ENCODE measurements at regions of chr10 and their contacts with region 1.

Region 1: DNA sequence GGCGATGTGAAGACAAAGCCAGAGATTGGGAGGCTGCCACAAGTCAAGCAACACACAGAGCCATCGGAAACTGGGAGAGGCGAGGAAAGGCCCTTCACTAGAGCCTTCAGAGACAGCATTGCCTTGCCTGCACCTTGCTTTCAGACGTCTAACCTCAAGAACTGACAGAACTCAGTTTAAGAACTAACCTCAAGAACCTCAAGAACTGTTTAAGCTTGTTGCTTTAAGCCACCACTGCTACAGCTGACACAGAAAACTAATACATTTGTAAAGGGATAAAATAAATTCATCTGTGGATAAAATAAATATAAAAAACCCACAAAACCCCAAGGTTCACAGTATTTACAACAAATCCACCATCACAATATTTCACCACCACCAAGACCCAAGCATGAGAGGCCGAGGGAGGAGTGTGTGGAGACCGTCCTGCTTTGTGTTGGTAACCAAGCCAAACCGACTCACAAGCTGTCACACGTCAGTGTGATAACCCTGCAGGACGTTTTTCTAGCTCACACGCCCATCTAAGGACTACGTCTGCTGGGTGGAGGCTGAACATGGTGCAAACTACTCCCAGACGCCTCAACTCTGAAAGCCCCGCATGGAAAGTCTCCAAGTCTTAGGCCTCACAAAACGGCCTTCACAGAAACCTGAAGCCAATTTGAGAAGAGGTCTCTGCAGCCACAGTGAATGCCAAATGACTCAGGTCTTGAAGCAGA is 116.8 kb downstream of the ABLIM1 start:
- DNase-seq: peak; percentile 86 to 92 (median 90)
- H3K4me3 ChIP-seq: no peak overlapping the region
- H3K4me3 Mint-ChIP-seq: peak overlapping the region; percentile 57 to 87 (median 76)
- H3K27ac ChIP-seq: peak overlapping the region; percentile 74
- H3K27ac Mint-ChIP-seq: peak overlapping the region; percentile 89 to 100 (median 98)
- H3K4me1 ChIP-seq: peaks cover 97% of the 10 kb centered on the region
- H3K4me1 Mint-ChIP-seq: peaks cover 67 to 92% (median 86%) of the 10 kb centered on the region in 4 donors
- H3K27me3 ChIP-seq: no peaks in the 10 kb centered on the region
- H3K27me3 Mint-ChIP-seq: no peaks in the 10 kb centered on the region

Region 2: DNA sequence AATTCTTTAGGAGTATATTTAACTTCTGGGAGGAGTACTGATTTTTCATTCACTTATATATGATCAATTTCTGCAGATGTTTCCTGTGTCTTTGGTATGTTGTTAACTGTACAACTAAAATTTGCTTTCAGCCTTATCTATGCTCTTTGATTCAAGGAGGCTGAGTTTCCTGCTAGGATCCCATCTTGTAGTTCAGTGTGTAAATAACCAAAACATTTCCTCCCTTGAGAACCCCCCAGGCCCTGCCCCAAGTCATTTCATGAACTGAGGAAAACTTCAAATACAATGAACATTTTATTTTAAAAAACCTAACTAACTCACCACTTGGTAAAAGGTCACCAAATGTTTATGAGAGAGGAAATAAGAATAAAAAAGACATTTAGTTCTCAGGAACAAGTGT is 246.7 kb before region 1 on chr10:
- CTCF ChIA-PET with region 1: no interaction called
- POLR2A ChIA-PET with region 1: no interaction called
- intact Hi-C with region 1: no loop called
- DNase-seq: no peak
- H3K4me3 ChIP-seq: no peak overlapping the region
- H3K4me3 Mint-ChIP-seq: peak overlapping the region in 1 of 8 donors; percentile 14
- H3K27ac ChIP-seq: no peak overlapping the region
- H3K27ac Mint-ChIP-seq: no peak overlapping the region
- H3K4me1 ChIP-seq: no peaks in the 10 kb centered on the region
- H3K4me1 Mint-ChIP-seq: no peaks in the 10 kb centered on the region
- H3K27me3 ChIP-seq: no peaks in the 10 kb centered on the region
- H3K27me3 Mint-ChIP-seq: no peaks in the 10 kb centered on the region

Region 3: DNA sequence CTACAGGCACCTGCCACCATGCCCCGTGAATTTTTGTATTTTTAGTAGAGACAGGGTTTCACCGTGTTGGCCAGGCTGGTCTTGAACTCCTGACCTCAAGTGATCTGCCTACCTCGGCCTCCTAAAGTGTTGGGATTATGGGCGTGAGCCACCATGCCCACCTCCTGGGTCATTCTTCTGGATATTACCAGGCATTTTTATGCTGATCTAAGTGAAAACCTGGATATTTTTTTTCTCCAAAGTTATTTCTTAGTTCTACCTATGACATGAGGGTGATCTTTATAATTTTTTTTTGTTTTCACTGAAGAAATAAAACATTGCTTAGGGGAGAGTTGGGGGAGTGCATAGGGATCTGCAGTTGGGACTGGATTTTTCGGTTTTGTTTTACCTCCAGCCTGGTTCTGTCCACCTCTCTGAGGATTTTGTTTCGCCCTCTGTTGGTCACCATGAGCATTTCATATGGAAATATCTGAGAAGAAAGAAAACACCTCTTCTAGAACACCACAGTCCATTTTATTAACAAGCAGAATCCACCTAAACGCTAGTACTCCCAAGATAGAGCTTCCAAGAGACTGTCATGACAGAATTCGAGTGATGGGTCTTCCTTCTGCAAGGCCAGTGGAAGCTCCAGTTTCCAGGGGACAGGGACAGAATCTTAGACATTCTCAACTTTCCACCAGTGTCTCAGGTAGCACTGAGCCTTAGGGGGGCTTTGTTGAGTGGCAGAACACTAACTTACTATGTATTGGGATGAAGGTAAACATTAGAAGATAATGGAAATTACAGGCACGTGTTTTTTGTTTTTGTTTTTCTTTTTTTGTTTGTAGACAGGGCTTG is 103.6 kb before region 1 on chr10:
- CTCF ChIA-PET with region 1: no interaction called
- POLR2A ChIA-PET with region 1: no interaction called
- intact Hi-C with region 1: no loop called
- DNase-seq: no peak
- H3K4me3 ChIP-seq: no peak overlapping the region
- H3K4me3 Mint-ChIP-seq: no peak overlapping the region
- H3K27ac ChIP-seq: no peak overlapping the region
- H3K27ac Mint-ChIP-seq: peak overlapping the region in 3 of 7 donors; percentile 9 to 49 (median 11)
- H3K4me1 ChIP-seq: no peaks in the 10 kb centered on the region
- H3K4me1 Mint-ChIP-seq: peaks cover 0 to 3% (median 0%) of the 10 kb centered on the region in 4 donors
- H3K27me3 ChIP-seq: no peaks in the 10 kb centered on the region
- H3K27me3 Mint-ChIP-seq: no peaks in the 10 kb centered on the region

Region 4: GRCh38 chr10:114448897-114449296 is 92.3 kb before region 1 on chr10:
- CTCF ChIA-PET with region 1: no interaction called
- POLR2A ChIA-PET with region 1: no interaction called
- intact Hi-C with region 1: no loop called
- DNase-seq: no peak
- H3K4me3 ChIP-seq: no peak overlapping the region
- H3K4me3 Mint-ChIP-seq: no peak overlapping the region
- H3K27ac ChIP-seq: no peak overlapping the region
- H3K27ac Mint-ChIP-seq: no peak overlapping the region
- H3K4me1 ChIP-seq: no peaks in the 10 kb centered on the region
- H3K4me1 Mint-ChIP-seq: peaks cover 0 to 10% (median 7%) of the 10 kb centered on the region in 4 donors
- H3K27me3 ChIP-seq: no peaks in the 10 kb centered on the region
- H3K27me3 Mint-ChIP-seq: no peaks in the 10 kb centered on the region

Region 5: DNA sequence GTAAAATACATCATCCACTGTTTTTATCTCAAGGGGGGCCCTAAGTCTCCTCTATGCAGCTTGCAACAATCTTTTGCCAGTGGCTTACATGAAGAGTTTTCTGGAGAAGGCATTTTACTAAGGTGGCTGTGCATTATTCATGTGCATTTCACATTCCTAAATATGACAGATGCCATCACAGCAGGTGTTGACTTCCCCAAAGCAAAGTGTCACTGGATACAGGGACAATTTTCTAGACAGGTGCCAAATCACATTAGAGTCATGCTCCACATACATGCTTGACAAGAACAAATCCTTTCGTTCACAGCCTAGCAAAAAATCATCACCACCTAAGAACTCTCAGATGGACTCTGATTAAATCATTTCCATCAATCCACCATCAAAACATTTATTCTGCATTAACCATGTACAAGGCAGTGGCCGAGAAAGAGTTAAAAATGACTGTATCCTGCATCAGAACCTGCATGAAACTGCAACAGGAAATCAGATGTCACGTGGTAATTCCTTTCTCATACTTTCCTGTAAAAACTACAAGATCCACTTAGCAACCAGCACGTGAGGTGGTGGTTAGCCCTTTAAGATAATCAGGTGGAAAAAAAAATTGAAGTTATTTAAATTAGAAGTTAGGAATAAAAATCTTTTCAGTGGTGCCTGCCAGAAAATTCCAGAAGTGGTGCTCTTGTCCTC is 48.7 kb before region 1 on chr10:
- CTCF ChIA-PET with region 1: interaction called, 3 read pairs
- POLR2A ChIA-PET with region 1: interaction called, 85 read pairs
- intact Hi-C with region 1: loop called (anchors 2 kb)
- DNase-seq: peak; percentile 20 to 54 (median 39)
- H3K4me3 ChIP-seq: no peak overlapping the region
- H3K4me3 Mint-ChIP-seq: peak overlapping the region in 7 of 8 donors; percentile 10 to 68 (median 59)
- H3K27ac ChIP-seq: no peak overlapping the region
- H3K27ac Mint-ChIP-seq: peak overlapping the region; percentile 15 to 84 (median 80)
- H3K4me1 ChIP-seq: peaks cover 53% of the 10 kb centered on the region
- H3K4me1 Mint-ChIP-seq: peaks cover 40 to 62% (median 54%) of the 10 kb centered on the region in 4 donors
- H3K27me3 ChIP-seq: no peaks in the 10 kb centered on the region
- H3K27me3 Mint-ChIP-seq: no peaks in the 10 kb centered on the region

Region 6: DNA sequence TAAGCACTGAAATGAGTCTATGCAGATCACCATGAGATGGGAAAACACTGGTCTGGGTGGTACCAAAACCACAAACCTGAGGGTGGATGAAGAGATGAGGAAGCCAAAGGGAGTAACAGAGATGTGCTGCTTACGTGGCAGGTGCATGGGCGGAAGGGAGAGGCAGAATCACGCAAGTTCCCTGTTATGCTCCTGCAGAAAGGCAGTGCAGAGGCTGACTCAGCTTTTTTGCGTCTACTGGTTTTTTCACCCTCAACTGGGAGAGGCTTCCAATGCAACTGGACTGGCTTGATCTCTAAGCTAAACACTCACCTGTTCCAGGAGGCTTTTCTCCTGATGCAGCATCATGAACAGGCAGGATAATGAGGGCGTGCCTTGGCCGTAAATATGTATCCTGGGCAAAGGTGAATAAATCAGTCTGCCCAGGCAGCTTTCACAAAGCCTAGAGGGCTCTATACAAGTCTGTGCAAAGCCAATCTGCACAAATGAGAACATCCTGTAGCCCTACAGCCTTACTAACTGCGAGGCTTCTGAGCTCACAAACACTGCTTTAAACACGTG is 41.5 kb before region 1 on chr10:
- CTCF ChIA-PET with region 1: interaction called, 4 read pairs
- POLR2A ChIA-PET with region 1: interaction called, 85 read pairs
- intact Hi-C with region 1: no loop called
- DNase-seq: peak; percentile 44 to 70 (median 59)
- H3K4me3 ChIP-seq: no peak overlapping the region
- H3K4me3 Mint-ChIP-seq: peak overlapping the region; percentile 36 to 75 (median 57)
- H3K27ac ChIP-seq: peak overlapping the region; percentile 49
- H3K27ac Mint-ChIP-seq: peak overlapping the region; percentile 70 to 93 (median 87)
- H3K4me1 ChIP-seq: peaks cover 82% of the 10 kb centered on the region
- H3K4me1 Mint-ChIP-seq: peaks cover 63 to 94% (median 82%) of the 10 kb centered on the region in 4 donors
- H3K27me3 ChIP-seq: no peaks in the 10 kb centered on the region
- H3K27me3 Mint-ChIP-seq: no peaks in the 10 kb centered on the region

Region 7: DNA sequence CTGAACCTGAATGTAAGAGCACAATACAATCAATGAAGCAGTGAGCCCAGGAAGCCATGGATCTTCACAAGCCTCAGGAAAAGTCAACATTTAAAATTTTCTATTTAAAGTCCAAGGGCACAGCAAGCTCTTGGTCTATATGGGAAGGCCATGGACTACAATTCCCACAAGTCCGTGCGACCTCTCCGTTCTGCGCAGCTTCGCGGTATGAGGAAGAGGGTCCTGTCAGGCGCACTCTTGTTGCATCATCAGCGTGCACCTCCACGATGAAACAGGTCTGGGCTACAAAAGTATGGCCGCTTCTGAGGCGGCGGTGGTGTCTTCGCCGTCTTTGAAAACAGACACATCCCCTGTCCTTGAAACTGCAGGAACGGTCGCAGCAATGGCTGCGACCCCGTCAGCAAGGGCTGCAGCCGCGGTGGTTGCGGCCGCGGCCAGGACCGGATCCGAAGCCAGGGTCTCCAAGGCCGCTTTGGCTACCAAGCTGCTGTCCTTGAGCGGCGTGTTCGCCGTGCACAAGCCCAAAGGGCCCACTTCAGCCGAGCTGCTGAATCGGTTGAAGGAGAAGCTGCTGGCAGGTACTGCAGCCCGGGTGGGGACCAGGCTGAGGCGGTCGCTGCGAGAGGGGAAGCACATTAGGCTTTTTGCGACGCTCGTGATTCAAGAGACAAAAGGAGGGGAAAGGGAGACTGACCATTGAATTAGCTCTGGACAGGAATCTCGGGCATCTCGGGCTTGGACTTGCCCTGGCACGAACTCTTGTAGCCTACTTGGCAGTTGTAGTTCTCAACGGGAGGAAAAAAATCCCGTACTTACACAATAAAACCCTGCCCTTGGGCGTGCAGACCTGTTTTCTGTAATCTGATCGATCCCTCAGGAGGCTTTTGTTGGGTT is 397.0 kb after region 1 on chr10 and contains the start of gene TRUB1:
- CTCF ChIA-PET with region 1: no interaction called
- POLR2A ChIA-PET with region 1: no interaction called
- intact Hi-C with region 1: loop called (anchors 5 kb)
- DNase-seq: peak; percentile 85 to 93 (median 87)
- H3K4me3 ChIP-seq: peak within 1 kb of the TSS; percentile 67 to 73
- H3K4me3 Mint-ChIP-seq: peak within 1 kb of the TSS; percentile 94 to 97 (median 96)
- H3K27ac ChIP-seq: peak within 1 kb of the TSS; percentile 75
- H3K27ac Mint-ChIP-seq: peak within 1 kb of the TSS; percentile 93 to 98 (median 97)
- H3K4me1 ChIP-seq: peaks cover 15% of the 10 kb centered on the region
- H3K4me1 Mint-ChIP-seq: peaks cover 21 to 41% (median 31%) of the 10 kb centered on the region in 4 donors
- H3K27me3 ChIP-seq: no peaks in the 10 kb centered on the region
- H3K27me3 Mint-ChIP-seq: no peaks in the 10 kb centered on the region
- total RNA-seq, gene TRUB1: 11.3 to 14.5 TPM

Measured in CD4-positive, alpha-beta memory T cell (primary cell).